Right ventricle myocardium superior (tissue), 1 donor: ENCODE measurements at regions of chr18 and their contacts with region 1.

Region 1: GRCh38 chr18:44325903-44326635 is 354.6 kb upstream of the SETBP1 start:
- DNase-seq: peak; percentile 42
- ATAC-seq: peak; percentile 58

Region 2: GRCh38 chr18:43620936-43621335 is 705.1 kb before region 1 on chr18:
- intact Hi-C with region 1: loop called (anchors 10 kb)
- DNase-seq: no peak
- ATAC-seq: peak; percentile 65

Region 3: GRCh38 chr18:44826418-44827259 is 500.6 kb after region 1 on chr18:
- intact Hi-C with region 1: no loop called
- DNase-seq: peak; percentile 64
- ATAC-seq: peak; percentile 79